ENCODE measurements at regions of chr15 and their contacts with region 1.

Region 1: DNA sequence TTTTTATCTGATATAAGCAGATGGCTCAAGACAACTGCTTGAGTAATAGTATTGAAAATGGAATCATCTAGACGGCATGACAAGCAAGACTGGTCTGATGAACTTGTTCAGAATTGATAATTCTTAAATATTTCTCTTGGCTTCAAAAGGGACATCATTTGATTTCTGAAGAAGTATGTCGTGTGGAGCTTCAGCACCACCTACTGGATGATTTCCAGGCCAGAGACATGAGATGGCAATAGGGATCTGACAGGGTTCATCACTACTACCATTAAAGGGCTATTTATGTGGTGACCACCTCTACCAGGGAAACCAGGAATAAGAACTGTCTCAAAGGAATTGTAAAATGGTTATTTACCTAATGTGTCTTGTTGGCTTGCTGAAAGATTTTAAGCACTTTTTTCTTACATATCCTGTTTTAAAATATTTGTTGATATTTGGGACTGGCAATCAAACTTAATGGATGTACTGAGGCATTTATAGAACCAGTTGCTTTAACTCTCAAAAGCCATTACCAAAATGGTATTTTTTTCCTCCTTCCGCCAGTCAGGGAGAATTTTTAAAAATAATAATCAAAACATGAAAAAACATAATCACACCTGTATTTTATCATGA is 99.5 kb upstream of the FAM98B start:
- DNase-seq: peak; percentile 64
- H3K4me3 ChIP-seq: no peak overlapping the region
- H3K27ac ChIP-seq: no peak overlapping the region
- H3K4me1 ChIP-seq: no peaks in the 10 kb centered on the region
- H3K27me3 ChIP-seq: no peaks in the 10 kb centered on the region
- CTCF ChIP-seq: peak; percentile 81

Region 2: DNA sequence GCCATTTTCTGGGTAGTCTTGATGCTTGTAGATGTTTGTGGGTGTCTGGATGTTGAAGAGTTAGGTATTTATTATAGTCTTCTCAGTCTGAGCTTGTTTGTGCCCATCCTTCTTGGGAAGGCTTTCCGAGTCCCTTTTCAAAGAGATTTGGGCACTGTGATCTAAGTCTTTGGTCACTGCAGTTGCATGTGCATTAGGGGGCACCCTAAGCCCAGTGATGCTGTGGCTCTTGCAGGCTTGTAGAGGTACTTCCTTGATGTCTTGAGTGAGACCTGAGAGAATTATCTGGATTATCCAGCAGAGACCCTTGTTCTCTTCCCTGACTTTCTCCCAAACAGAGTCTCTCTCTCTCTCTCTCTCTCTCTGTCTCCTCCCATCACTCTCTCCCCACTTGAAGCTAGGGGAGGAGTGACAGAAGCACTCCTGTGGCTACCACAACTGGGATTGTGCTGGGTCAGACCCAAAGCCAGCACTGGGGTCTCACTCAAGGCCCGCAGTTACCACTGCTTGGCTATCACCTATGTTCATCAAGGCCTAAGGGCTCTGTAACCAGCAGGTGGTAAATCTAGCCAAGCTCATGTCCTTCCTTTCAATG is 351.4 kb before region 1 on chr15:
- intact Hi-C with region 1: loop called (anchors 2 kb)
- DNase-seq: peak; percentile 75
- H3K4me3 ChIP-seq: no peak overlapping the region
- H3K27ac ChIP-seq: no peak overlapping the region
- H3K4me1 ChIP-seq: no peaks in the 10 kb centered on the region
- H3K27me3 ChIP-seq: no peaks in the 10 kb centered on the region
- CTCF ChIP-seq: peak; percentile 58

Region 3: DNA sequence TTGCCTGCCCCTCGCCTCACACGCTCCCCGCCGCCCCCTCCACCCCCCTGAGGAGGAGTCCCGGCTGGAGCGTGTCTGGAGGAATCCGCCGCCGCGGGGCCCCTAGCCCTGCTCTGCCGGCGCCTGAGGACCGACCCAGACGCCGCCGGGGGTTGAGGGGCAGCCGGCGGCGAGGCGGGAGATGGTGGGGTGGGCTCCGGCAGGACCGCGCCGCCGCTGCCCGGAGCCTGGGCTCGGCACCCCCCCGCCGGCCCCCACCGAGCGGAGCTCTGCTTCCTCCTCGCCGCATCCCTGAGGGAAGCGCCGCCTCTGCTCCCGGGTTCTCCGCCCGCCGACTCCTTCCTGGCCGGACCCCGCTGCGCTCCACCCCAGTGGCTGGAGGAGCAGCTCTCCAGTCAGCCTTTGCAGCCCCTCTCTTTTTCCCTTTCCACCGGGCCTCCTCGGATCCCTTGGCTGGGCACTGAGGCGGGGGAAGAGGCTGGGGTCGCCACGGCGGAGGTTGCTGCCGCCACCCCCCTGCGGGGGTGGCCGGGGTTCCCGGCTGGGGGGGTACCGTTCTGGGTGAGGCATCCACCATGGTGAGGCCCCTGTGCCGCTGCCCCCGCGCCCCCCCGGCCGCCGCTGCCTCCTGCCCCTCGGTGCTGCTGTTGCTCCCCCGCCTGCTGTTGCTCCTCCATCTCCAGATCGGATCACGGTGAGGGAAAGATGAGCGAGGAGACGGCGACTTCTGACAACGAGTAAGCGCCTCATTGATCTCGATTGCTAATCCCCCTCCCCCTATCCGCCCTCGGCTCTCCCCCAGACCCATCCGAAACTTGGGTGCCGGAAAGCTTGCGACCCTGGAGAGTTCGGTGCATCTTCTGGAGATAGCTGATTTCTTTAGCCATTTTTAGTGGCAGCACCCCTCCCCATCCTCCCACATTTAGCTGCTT is 101.7 kb before region 1 on chr15 and contains the start of gene SPRED1:
- intact Hi-C with region 1: loop called (anchors 10 kb)
- DNase-seq: peak; percentile 70
- H3K4me3 ChIP-seq: peak within 1 kb of the TSS; percentile 75
- H3K27ac ChIP-seq: peak within 1 kb of the TSS; percentile 99
- H3K4me1 ChIP-seq: no peaks in the 10 kb centered on the region
- H3K27me3 ChIP-seq: no peaks in the 10 kb centered on the region
- CTCF ChIP-seq: no peak
- total RNA-seq, gene SPRED1: 26.8 to 28.0 TPM

Region 4: DNA sequence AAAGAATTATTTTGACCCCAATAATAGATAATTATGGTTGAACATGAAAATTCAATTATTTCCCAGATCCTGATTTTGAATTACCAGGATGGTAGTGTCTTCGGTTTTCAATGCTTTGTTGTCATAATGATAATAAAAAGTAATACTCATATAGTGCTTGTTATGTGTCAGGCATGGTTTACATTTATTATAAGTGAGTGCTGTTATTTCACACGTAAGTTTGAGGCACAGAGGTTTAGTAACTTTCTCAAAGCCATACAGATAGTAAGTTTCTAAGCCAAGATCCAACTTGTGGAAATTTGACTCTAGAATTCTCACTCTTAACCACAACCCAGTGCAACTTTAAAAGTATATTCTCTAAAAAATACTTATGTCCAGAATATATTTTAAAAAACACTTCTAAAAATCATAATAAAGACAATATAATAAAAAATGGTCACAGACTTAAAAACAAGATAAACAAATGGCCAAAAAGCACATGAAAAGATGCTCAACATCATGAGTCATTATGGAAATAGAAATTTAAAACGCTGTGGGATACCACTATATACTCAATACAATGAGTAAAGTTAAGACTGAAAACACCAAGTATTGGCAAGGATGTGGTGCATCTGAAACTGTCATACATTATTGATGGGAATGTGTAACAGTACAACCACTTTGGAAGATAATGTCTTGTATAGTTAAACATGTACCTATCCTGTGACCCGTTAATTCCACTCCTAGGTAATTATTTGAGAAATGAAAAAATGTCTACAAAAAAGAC is 56.6 kb before region 1 on chr15:
- intact Hi-C with region 1: no loop called
- DNase-seq: no peak
- H3K4me3 ChIP-seq: no peak overlapping the region
- H3K27ac ChIP-seq: no peak overlapping the region
- H3K4me1 ChIP-seq: no peaks in the 10 kb centered on the region
- H3K27me3 ChIP-seq: no peaks in the 10 kb centered on the region
- CTCF ChIP-seq: no peak

Measured in colonic mucosa (tissue), 4 donors.